ENCODE measurements at regions of chrX and their contacts with region 1.

Region 1: DNA sequence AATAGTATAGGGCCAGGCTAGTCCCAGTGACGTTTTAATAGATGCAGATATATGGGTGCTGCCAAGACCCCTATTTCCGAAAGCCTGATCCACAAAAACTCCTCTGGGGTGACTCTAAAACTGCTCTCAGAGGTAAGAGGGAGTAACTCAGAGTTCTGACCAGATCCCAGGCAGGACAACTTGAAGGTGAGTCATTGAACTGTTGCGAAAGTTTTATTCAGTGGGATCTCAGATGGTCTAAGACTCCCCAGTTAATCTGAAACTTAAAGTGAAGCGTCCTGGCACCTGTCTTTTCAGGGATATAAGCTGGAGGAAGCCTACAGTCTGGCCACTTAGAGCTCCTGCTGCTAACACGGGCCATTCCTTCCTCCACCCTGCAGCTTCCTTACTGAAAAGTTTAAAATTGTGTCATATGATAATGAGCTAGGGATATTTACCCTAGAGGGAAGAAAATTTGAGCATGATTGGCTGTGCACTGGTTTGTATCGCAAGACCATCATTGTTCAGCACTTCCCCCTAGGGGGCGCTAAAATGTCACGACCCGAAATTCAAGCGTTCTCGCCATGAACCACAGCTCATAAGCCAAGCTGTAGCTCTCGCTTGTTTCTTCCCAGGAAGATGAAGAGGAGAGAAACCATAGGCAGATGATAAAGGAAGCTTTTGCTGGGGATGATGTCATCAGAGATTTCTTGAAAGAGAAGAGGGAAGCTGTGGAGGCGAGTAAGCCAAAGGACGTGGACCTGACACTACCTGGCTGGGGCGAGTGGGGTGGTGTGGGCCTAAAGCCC is 19.5 kb downstream of the UTP14A start:
- DNase-seq: peak; percentile 43
- ATAC-seq: peak; percentile 80 to 91

Region 2: GRCh38 chrX:130013661-130014060 is 88.2 kb after region 1 on chrX:
- intact Hi-C with region 1: no loop called
- DNase-seq: no peak
- ATAC-seq: no peak

Region 3: GRCh38 chrX:130028196-130028595 is 102.7 kb after region 1 on chrX:
- intact Hi-C with region 1: loop called (anchors 2 to 5 kb)
- DNase-seq: peak; percentile 38
- ATAC-seq: no peak

Region 4: GRCh38 chrX:130196466-130196865 is 271.0 kb after region 1 on chrX:
- intact Hi-C with region 1: loop called in 1 of 2 experiments (anchors 10 kb)
- DNase-seq: no peak
- ATAC-seq: no peak

Measured in left cardiac atrium (tissue), 4 donors.